Thyroid gland (tissue), 4 donors: ENCODE measurements at regions of chr13 and their contacts with region 1.

Region 1: GRCh38 chr13:108961542-108962125 is 332.2 kb downstream of the MYO16 start:
- DNase-seq: no peak
- H3K4me3 ChIP-seq: no peak overlapping the region
- H3K27ac ChIP-seq: no peak overlapping the region
- H3K4me1 ChIP-seq: no peaks in the 10 kb centered on the region
- H3K27me3 ChIP-seq: no peaks in the 10 kb centered on the region
- CTCF ChIP-seq: peak; percentile 65 to 88 (median 80)
- POLR2A ChIP-seq: no peak

Region 2: GRCh38 chr13:109010912-109011311 is 49.3 kb after region 1 on chr13:
- intact Hi-C with region 1: no loop called
- DNase-seq: no peak
- H3K4me3 ChIP-seq: no peak overlapping the region
- H3K27ac ChIP-seq: no peak overlapping the region
- H3K4me1 ChIP-seq: no peaks in the 10 kb centered on the region
- H3K27me3 ChIP-seq: no peaks in the 10 kb centered on the region
- CTCF ChIP-seq: no peak
- POLR2A ChIP-seq: no peak

Region 3: DNA sequence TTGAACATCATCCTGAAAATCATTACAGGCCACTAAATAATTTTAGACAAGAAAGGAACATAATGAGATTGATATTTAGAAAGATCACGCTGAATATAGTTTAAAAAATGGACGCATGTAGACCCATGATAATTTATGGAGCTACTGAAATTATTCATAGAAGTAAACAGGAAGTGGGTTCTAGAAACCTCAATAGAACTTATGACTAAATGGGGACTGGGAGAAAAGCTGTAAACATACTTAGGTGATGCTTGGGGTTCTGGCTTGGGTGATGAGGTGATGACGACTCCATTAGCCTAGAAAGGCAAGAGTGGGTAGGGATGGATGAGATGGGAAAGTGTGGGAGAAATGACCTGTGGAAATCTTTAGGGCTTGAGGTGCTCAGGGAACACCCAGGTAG is 151.8 kb after region 1 on chr13:
- intact Hi-C with region 1: no loop called
- DNase-seq: no peak
- H3K4me3 ChIP-seq: no peak overlapping the region
- H3K27ac ChIP-seq: no peak overlapping the region
- H3K4me1 ChIP-seq: no peaks in the 10 kb centered on the region
- H3K27me3 ChIP-seq: no peaks in the 10 kb centered on the region
- CTCF ChIP-seq: no peak
- POLR2A ChIP-seq: no peak

Region 4: DNA sequence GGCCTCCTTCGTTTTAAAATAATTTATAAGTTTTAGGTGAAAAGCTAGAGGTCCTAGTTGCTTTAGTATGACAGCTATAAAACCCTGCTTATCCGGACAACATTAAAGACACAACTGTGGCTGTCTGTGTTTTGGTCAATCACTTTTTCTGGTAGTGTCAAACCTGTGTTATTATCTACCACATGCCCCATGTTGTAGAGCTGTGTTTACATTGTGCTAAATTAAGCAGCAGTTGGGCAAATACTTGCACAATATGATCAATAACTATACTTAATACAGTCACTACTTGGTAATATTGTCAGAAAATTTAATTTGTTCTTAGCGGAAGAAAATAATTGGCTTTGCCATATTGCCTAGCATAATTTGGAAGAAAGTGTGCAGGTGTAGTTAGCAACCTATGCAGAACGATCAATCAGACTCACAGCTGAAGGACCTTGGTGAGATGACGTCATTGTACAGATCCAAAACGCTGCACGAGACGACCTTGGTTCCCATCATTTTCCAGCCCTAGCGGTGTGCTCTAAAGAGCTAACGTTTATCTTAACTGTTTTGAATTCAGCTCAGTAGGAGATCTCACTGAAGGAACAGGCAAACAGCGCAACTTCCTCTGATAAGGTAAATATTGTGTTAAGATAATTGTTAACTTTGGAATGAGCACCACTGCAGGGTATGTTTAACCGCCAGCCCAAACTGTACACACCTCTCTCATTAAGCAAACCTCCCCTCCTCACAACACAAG is 348.2 kb after region 1 on chr13:
- intact Hi-C with region 1: no loop called
- DNase-seq: no peak
- H3K4me3 ChIP-seq: no peak overlapping the region
- H3K27ac ChIP-seq: no peak overlapping the region
- H3K4me1 ChIP-seq: no peaks in the 10 kb centered on the region
- H3K27me3 ChIP-seq: no peaks in the 10 kb centered on the region
- CTCF ChIP-seq: no peak
- POLR2A ChIP-seq: no peak

Region 5: DNA sequence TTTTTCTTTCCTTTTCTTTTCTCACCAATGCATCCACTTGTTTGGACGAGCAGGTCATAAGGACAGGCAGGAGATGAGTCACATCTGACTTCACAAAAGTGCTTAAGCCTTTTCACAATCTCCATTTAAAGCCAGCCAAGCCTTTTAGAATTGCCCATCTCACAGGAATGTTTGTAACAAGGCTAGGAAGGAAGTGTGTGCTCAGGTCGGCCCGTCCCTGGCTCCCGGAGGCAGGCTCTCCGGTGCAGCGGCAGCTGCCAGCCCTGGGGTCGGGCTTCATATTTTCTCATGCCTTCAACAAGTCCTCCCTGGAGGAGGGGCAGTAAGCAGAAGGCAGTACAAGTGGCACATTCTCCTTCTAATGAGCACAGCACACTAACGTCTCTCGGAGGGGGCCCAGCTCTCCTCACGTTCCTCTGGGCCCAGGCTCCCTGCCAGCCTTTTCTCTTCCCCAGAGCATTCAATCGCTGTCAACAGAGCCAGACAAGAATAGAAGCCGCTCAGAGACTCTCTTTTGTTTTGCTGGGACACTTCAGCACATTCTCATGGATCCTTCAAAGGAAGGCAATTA is 1164.8 kb after region 1 on chr13:
- intact Hi-C with region 1: loop called (anchors 10 kb)
- DNase-seq: peak; percentile 82 to 84
- H3K4me3 ChIP-seq: no peak overlapping the region
- H3K27ac ChIP-seq: peak overlapping the region; percentile 84 to 91 (median 87)
- H3K4me1 ChIP-seq: peaks cover 17 to 19% of the 10 kb centered on the region in 2 donors
- H3K27me3 ChIP-seq: no peaks in the 10 kb centered on the region
- CTCF ChIP-seq: no peak
- POLR2A ChIP-seq: peak in 1 of 2 donors; percentile 37